ENCODE measurements at regions of chr16 and their contacts with region 1.

Region 1: GRCh38 chr16:17852977-17853702 is 382.4 kb upstream of the XYLT1 start:
- DNase-seq: no peak
- H3K4me3 Mint-ChIP-seq: no peak overlapping the region
- H3K27ac Mint-ChIP-seq: no peak overlapping the region
- H3K4me1 Mint-ChIP-seq: no peaks in the 10 kb centered on the region
- H3K27me3 Mint-ChIP-seq: no peaks in the 10 kb centered on the region
- CTCF ChIP-seq: no peak

Region 2: DNA sequence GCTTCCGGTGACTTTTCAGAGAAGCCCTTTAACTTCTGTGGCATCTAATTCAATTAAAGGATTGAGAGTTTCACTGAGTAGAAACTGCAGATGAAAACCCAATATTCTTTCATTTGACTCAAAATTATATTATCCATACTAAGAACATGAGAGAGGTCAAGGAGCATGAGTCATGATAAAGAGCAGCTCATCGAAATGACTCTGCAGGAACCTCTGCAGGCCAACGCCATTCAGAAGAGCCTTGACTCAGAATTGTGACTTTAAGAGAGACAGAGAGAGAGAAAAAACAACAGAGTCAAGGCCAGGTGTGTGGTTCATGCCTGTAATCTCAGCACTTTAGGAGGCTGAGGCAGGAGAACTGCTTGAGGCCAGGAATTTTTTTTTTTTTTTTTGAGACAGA is 34.8 kb after region 1 on chr16:
- CTCF ChIA-PET with region 1: no interaction called
- intact Hi-C with region 1: loop called (anchors 1 kb)
- DNase-seq: no peak
- H3K4me3 Mint-ChIP-seq: no peak overlapping the region
- H3K27ac Mint-ChIP-seq: no peak overlapping the region
- H3K4me1 Mint-ChIP-seq: no peaks in the 10 kb centered on the region
- H3K27me3 Mint-ChIP-seq: no peaks in the 10 kb centered on the region
- CTCF ChIP-seq: no peak

Measured in Calu3 (cell line).